Naive thymus-derived CD4-positive, alpha-beta T cell (primary cell): ENCODE measurements at regions of chr19 and their contacts with region 1.

Region 1: GRCh38 chr19:48872182-48872883 is at the start of gene PPP1R15A:
- DNase-seq: peak; percentile 96 to 99 (median 98)
- ATAC-seq: peak; percentile 58
- H3K4me3 ChIP-seq: peak within 1 kb of the TSS; percentile 86
- H3K4me3 Mint-ChIP-seq: peak within 1 kb of the TSS; percentile 94 to 100 (median 98)
- H3K27ac ChIP-seq: peak within 1 kb of the TSS; percentile 99
- H3K27ac Mint-ChIP-seq: peak within 1 kb of the TSS; percentile 94 to 100 (median 99)
- H3K4me1 ChIP-seq: peaks cover 34 to 36% of the 10 kb centered on the region in 2 donors
- H3K4me1 Mint-ChIP-seq: peaks cover 31 to 51% (median 41%) of the 10 kb centered on the region in 7 donors
- H3K27me3 ChIP-seq: no peaks in the 10 kb centered on the region
- H3K27me3 Mint-ChIP-seq: peaks cover 0 to 14% (median 0%) of the 10 kb centered on the region in 5 donors
- total RNA-seq, gene PPP1R15A: 31.5 to 1,030 (median 71.9) TPM

Region 2: DNA sequence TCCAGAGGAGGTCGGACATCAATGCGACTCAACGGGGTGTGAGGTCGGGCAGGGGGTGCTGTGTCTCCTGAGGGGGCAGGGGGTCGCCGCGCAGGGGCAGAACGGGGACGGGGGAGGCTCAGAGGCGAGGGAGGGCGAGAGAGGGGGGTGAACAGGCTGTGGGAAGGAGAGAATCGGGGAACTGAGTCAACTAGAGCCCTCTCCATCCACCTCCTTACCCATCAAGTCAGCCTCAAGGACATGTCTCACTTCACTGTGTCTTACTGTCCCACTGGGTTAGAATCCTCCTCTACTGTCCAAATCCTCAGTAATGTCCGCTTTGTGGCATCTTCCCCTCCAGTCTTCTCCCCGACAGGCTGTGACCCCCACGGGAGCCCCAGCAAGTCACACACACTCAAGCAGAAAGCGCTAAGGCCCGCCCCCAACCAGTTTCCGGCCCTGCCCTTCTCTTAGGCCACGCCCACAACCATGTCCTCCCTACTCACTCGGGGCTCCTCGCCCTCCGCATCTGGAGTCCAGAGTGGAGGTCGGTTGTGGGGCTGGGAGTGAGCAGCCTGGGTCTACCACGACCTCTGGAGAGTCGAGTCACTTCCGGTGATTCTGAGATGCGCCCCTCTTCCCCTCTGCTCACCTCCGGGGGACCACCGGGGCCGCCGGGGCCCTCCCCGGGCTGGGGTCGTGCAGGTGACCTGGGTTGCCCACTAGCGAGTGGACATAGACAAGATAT is 13.2 kb before region 1 on chr19:
- CTCF ChIA-PET with region 1: no interaction called
- POLR2A ChIA-PET with region 1: interaction called, 5 read pairs
- intact Hi-C with region 1: loop called (anchors 1 kb)
- DNase-seq: peak; percentile 54 to 83 (median 77)
- ATAC-seq: peak; percentile 87
- H3K4me3 ChIP-seq: peak overlapping the region; percentile 48
- H3K4me3 Mint-ChIP-seq: peak overlapping the region; percentile 90 to 99 (median 94)
- H3K27ac ChIP-seq: peak overlapping the region; percentile 56
- H3K27ac Mint-ChIP-seq: peak overlapping the region; percentile 7 to 94 (median 91)
- H3K4me1 ChIP-seq: no peaks in the 10 kb centered on the region
- H3K4me1 Mint-ChIP-seq: peaks cover 0 to 8% (median 0%) of the 10 kb centered on the region in 7 donors
- H3K27me3 ChIP-seq: no peaks in the 10 kb centered on the region
- H3K27me3 Mint-ChIP-seq: no peaks in the 10 kb centered on the region

Region 3: DNA sequence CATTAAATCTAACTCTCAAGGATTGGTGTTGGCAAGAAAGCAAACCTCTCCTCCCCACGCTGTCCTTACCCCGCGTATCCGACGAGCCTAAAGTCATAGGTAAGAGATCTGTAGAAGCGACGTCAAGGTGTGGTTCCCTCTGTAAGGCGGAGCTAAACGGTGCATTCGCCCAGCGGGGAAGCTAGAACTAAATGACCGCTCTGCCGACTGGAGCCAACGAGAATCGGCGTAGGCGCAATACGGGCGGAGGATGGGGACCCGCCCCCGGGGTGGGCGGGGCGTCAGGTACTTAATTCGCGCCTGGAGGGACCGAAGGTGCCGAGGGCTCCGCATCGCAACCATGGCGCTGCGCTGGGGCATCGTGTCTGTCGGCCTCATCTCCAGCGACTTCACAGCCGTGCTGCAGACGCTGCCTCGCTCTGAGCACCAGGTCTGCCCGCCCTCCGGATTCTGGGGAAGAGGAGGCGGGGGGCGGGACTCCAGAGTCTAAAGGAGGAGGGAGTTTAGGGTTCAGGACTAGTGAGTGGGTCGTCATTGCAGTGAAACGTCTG is 61.1 kb after region 1 on chr19 and contains the start of gene DHDH:
- CTCF ChIA-PET with region 1: no interaction called
- POLR2A ChIA-PET with region 1: interaction called, 5 read pairs
- intact Hi-C with region 1: loop called (anchors 1 to 5 kb)
- DNase-seq: peak; percentile 75 to 90 (median 87)
- ATAC-seq: peak; percentile 98
- H3K4me3 ChIP-seq: peak within 1 kb of the TSS; percentile 50
- H3K4me3 Mint-ChIP-seq: peak within 1 kb of the TSS; percentile 78 to 91 (median 86)
- H3K27ac ChIP-seq: peak within 1 kb of the TSS; percentile 57
- H3K27ac Mint-ChIP-seq: peak within 1 kb of the TSS; percentile 66 to 94 (median 91)
- H3K4me1 ChIP-seq: peaks cover 6 to 7% of the 10 kb centered on the region in 2 donors
- H3K4me1 Mint-ChIP-seq: peaks cover 7 to 17% (median 14%) of the 10 kb centered on the region in 7 donors
- H3K27me3 ChIP-seq: no peaks in the 10 kb centered on the region
- H3K27me3 Mint-ChIP-seq: peaks cover 0 to 16% (median 0%) of the 10 kb centered on the region in 5 donors
- total RNA-seq, gene DHDH: 1.1 to 1.7 (median 1.3) TPM

Region 4: DNA sequence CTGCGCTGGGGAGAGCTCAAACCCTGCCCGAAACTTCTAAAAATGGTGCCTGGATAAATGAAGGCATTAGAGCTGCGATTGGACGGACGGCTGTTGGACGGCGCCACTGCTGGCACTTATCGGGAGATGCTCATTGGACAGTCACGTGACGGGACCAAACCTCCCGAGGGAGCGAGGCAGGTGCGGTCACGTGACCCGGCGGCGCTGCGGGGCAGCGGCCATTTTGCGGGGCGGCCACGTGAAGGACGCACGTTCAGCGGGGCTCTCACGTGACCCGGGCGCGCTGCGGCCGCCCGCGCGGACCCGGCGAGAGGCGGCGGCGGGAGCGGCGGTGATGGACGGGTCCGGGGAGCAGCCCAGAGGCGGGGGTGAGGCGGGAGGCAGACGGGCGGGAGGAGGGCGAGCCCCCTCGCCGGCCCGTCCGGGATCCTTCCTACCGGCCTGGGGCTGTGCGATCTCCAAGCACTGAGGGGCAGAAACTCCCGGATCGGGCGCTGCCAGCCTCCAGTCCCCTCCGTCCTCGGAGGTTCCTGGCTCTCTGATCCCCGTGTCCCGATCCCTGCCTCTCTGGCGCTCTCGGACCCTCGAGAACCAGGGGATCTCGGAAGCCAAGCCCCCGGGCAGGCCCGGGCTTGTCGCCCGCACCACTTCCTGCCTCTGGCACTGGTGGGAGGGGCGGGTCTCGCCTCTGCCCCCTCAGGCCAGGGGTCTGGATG is 82.4 kb after region 1 on chr19 and contains the start of gene BAX:
- CTCF ChIA-PET with region 1: no interaction called
- POLR2A ChIA-PET with region 1: interaction called, 4 read pairs
- intact Hi-C with region 1: loop called (anchors 1 to 2 kb)
- DNase-seq: peak; percentile 59 to 96 (median 71)
- ATAC-seq: peak; percentile 92
- H3K4me3 ChIP-seq: peak within 1 kb of the TSS; percentile 65
- H3K4me3 Mint-ChIP-seq: peak within 1 kb of the TSS; percentile 88 to 95 (median 94)
- H3K27ac ChIP-seq: peak within 1 kb of the TSS; percentile 85
- H3K27ac Mint-ChIP-seq: peak within 1 kb of the TSS; percentile 77 to 94 (median 91)
- H3K4me1 ChIP-seq: peaks cover 12 to 19% of the 10 kb centered on the region in 2 donors
- H3K4me1 Mint-ChIP-seq: peaks cover 26 to 46% (median 38%) of the 10 kb centered on the region in 7 donors
- H3K27me3 ChIP-seq: no peaks in the 10 kb centered on the region
- H3K27me3 Mint-ChIP-seq: peaks cover 0 to 2% (median 0%) of the 10 kb centered on the region in 5 donors
- total RNA-seq, gene BAX: 78.7 to 355 (median 122) TPM

Region 5: GRCh38 chr19:48965040-48965805 is 92.9 kb after region 1 on chr19 and contains the start of gene FTL:
- CTCF ChIA-PET with region 1: interaction called, 16 read pairs
- POLR2A ChIA-PET with region 1: interaction called, 12 read pairs
- intact Hi-C with region 1: loop called (anchors 1 to 2 kb)
- DNase-seq: peak; percentile 77 to 93 (median 84)
- ATAC-seq: peak; percentile 85
- H3K4me3 ChIP-seq: peak within 1 kb of the TSS; percentile 86
- H3K4me3 Mint-ChIP-seq: peak within 1 kb of the TSS; percentile 94 to 100 (median 99)
- H3K27ac ChIP-seq: peak within 1 kb of the TSS; percentile 73
- H3K27ac Mint-ChIP-seq: peak within 1 kb of the TSS; percentile 93 to 100 (median 97)
- H3K4me1 ChIP-seq: peaks cover 30 to 37% of the 10 kb centered on the region in 2 donors
- H3K4me1 Mint-ChIP-seq: peaks cover 42 to 69% (median 62%) of the 10 kb centered on the region in 7 donors
- H3K27me3 ChIP-seq: no peaks in the 10 kb centered on the region
- H3K27me3 Mint-ChIP-seq: no peaks in the 10 kb centered on the region
- total RNA-seq, gene FTL: 888 to 1,929 (median 1,286) TPM

Region 6: GRCh38 chr19:48970923-48971395 is 98.6 kb after region 1 on chr19:
- CTCF ChIA-PET with region 1: interaction called, 16 read pairs
- POLR2A ChIA-PET with region 1: interaction called, 12 read pairs
- intact Hi-C with region 1: no loop called
- DNase-seq: peak; percentile 57 to 81 (median 72)
- ATAC-seq: peak; percentile 85
- H3K4me3 ChIP-seq: no peak overlapping the region
- H3K4me3 Mint-ChIP-seq: peak overlapping the region in 1 of 10 donors; percentile 18
- H3K27ac ChIP-seq: no peak overlapping the region
- H3K27ac Mint-ChIP-seq: peak overlapping the region in 4 of 9 donors; percentile 26 to 77 (median 42)
- H3K4me1 ChIP-seq: peaks cover 8 to 11% of the 10 kb centered on the region in 2 donors
- H3K4me1 Mint-ChIP-seq: peaks cover 5 to 26% (median 20%) of the 10 kb centered on the region in 7 donors
- H3K27me3 ChIP-seq: no peaks in the 10 kb centered on the region
- H3K27me3 Mint-ChIP-seq: no peaks in the 10 kb centered on the region

Region 7: GRCh38 chr19:49869441-49870176 is 997.3 kb after region 1 on chr19:
- CTCF ChIA-PET with region 1: no interaction called
- POLR2A ChIA-PET with region 1: no interaction called
- intact Hi-C with region 1: loop called in 1 of 2 experiments (anchors 2 kb)
- DNase-seq: peak; percentile 83 to 94 (median 87)
- ATAC-seq: peak; percentile 87
- H3K4me3 ChIP-seq: peak overlapping the region; percentile 58
- H3K4me3 Mint-ChIP-seq: peak overlapping the region in 2 of 10 donors; percentile 87
- H3K27ac ChIP-seq: peak overlapping the region; percentile 72
- H3K27ac Mint-ChIP-seq: peak overlapping the region in 5 of 9 donors; percentile 59 to 87 (median 74)
- H3K4me1 ChIP-seq: peaks cover 31 to 38% of the 10 kb centered on the region in 2 donors
- H3K4me1 Mint-ChIP-seq: peaks cover 25 to 51% (median 45%) of the 10 kb centered on the region in 7 donors
- H3K27me3 ChIP-seq: no peaks in the 10 kb centered on the region
- H3K27me3 Mint-ChIP-seq: no peaks in the 10 kb centered on the region